ENCODE measurements at regions of chr9 and their contacts with region 1.

Region 1: GRCh38 chr9:87324613-87325194 is 173.0 kb upstream of the DAPK1 start:
- DNase-seq: peak; percentile 67
- CTCF ChIP-seq: peak; percentile 74

Region 2: GRCh38 chr9:86413966-86414880 is 910.5 kb before region 1 on chr9:
- CTCF ChIA-PET with region 1: interaction called, 16 read pairs
- POLR2A ChIA-PET with region 1: no interaction called
- DNase-seq: peak; percentile 37
- CTCF ChIP-seq: peak; percentile 49

Region 3: GRCh38 chr9:86434039-86434726 is 890.5 kb before region 1 on chr9:
- CTCF ChIA-PET with region 1: interaction called, 31 read pairs
- POLR2A ChIA-PET with region 1: no interaction called
- DNase-seq: peak; percentile 48
- CTCF ChIP-seq: peak; percentile 77

Region 4: GRCh38 chr9:86486891-86487837 is 837.5 kb before region 1 on chr9:
- CTCF ChIA-PET with region 1: interaction called, 28 read pairs
- POLR2A ChIA-PET with region 1: no interaction called
- DNase-seq: peak; percentile 39
- CTCF ChIP-seq: peak; percentile 31

Region 5: DNA sequence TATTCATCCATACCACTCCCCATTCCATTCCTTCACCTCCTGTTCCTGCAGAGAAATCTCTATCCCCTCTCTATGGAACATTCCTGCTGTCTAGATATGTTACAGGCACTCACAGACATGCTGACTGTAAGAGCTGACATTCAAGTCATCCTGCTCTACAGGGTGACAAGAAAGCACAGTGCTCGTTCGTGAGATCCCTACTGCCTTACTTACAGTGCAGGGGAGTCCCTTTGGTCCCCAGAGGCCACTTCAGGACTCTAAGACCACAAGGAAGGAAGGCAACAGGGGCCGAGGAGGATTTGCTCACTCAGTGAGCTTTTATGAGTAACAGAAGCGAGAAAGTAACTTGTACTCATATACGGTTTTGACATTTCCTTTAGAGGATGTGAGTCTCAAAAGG is 487.9 kb before region 1 on chr9:
- CTCF ChIA-PET with region 1: no interaction called
- POLR2A ChIA-PET with region 1: no interaction called
- DNase-seq: peak; percentile 14
- CTCF ChIP-seq: no peak

Region 6: GRCh38 chr9:87309236-87309635 is 15.5 kb before region 1 on chr9:
- CTCF ChIA-PET with region 1: interaction called, 16 read pairs
- POLR2A ChIA-PET with region 1: no interaction called
- DNase-seq: no peak
- CTCF ChIP-seq: no peak

Region 7: GRCh38 chr9:87336914-87337333 is 12.2 kb after region 1 on chr9:
- CTCF ChIA-PET with region 1: interaction called, 11 read pairs
- POLR2A ChIA-PET with region 1: no interaction called
- DNase-seq: peak; percentile 54
- CTCF ChIP-seq: peak; percentile 64

Region 8: GRCh38 chr9:87497604-87498045 is 172.9 kb after region 1 on chr9 and contains the start of gene DAPK1:
- CTCF ChIA-PET with region 1: no interaction called
- POLR2A ChIA-PET with region 1: no interaction called
- DNase-seq: peak; percentile 84
- CTCF ChIP-seq: no peak